Mammary epithelial cell (primary cell): ENCODE measurements at regions of chr5 and their contacts with region 1.

Region 1: DNA sequence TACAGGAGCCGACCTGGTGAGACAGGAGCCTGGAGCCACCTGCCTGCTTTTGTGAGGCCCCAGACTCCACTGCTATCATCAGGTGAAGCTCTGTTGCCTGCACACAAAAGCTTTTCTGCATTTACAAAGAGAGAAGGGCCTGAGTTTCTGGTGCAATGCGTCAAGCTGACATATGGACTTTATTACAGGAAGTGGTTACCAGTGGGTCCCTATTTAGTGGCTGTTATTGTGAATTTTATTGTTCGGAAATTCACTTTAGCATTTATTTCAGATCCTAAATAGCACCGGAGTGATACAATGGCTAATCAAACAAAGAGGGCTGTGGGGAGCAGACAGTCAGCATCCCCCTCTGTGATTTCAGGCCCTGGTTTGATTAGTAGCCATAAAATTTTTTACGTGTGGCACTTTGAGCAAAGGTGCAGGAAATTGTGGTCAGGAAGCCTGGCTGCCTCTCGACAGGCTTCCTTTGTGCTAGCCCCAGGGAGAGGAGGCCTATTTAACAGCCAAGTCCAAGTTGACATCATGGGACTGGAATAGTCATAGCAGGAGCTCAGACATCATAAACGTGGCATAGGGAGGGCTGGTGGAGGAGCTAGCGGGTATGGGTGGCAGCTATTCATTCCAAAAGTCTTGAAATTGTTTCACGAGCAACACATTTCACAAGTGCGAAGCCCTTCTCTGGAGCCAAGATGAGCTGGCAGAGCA is 8.4 kb downstream of the TGFBI start:
- DNase-seq: peak; percentile 91
- H3K4me3 ChIP-seq: no peak overlapping the region
- H3K27ac ChIP-seq: peak overlapping the region; percentile 66
- H3K4me1 ChIP-seq: peaks cover 56% of the 10 kb centered on the region
- H3K27me3 ChIP-seq: no peaks in the 10 kb centered on the region
- CTCF ChIP-seq: no peak

Region 2: GRCh38 chr5:135864503-135865435 is 172.4 kb before region 1 on chr5:
- CTCF ChIA-PET with region 1: no interaction called
- dilution Hi-C with region 1: no loop called
- in situ Hi-C with region 1: no loop called
- intact Hi-C with region 1: no loop called
- DNase-seq: no peak
- H3K4me3 ChIP-seq: no peak overlapping the region
- H3K27ac ChIP-seq: no peak overlapping the region
- H3K4me1 ChIP-seq: no peaks in the 10 kb centered on the region
- H3K27me3 ChIP-seq: peaks cover 2% of the 10 kb centered on the region
- CTCF ChIP-seq: no peak

Region 3: GRCh38 chr5:135900276-135900675 is 136.9 kb before region 1 on chr5:
- CTCF ChIA-PET with region 1: no interaction called
- dilution Hi-C with region 1: no loop called
- in situ Hi-C with region 1: no loop called
- intact Hi-C with region 1: no loop called
- DNase-seq: no peak
- H3K4me3 ChIP-seq: no peak overlapping the region
- H3K27ac ChIP-seq: no peak overlapping the region
- H3K4me1 ChIP-seq: no peaks in the 10 kb centered on the region
- H3K27me3 ChIP-seq: peaks cover 1% of the 10 kb centered on the region
- CTCF ChIP-seq: no peak

Region 4: DNA sequence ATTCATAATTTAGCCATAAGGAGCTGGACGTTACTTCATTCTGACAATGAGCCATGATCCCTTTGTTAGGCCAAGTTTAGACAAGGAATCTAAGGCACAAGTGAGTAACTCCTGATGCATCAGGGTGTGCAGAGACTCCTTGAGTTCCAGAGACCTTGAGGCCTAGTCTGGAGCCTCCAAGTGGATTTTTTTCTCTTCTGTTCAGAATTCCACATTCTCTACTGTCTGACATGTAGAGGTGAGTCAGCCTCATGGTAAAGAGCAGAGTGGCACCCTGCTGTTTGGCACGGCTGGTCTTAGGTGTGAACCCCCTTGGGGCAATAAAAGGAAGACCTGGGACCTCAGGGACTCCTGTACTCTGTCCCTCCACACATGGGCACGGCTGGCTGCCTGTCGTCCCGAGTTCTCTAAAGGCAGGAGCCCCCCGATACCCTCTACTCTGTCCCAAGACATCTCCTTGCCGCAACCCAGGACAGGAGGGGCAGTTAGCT is 30.3 kb before region 1 on chr5:
- CTCF ChIA-PET with region 1: no interaction called
- dilution Hi-C with region 1: no loop called
- in situ Hi-C with region 1: no loop called
- intact Hi-C with region 1: loop called (anchors 1 kb)
- DNase-seq: peak; percentile 96
- H3K4me3 ChIP-seq: no peak overlapping the region
- H3K27ac ChIP-seq: peak overlapping the region; percentile 82
- H3K4me1 ChIP-seq: peaks cover 50% of the 10 kb centered on the region
- H3K27me3 ChIP-seq: no peaks in the 10 kb centered on the region
- CTCF ChIP-seq: no peak

Region 5: DNA sequence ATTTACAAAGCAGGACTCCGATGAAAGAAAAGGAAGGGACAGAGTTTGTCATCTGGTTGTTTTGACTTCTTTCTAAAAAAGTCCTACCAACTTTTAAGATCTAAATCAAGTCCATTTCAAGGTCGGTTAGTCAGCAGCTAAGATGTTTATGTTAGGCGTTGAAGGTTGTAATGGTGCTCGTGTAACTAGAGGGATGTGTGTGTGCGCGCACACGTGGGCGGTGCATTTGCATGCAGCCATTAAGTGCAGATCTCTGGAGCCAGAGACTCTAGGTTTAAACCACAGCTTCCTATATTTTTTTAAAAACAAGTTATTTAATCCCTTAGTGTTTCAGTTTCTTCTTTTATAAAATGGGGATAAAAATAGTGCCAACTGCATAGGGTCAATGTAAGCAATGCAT is 232.8 kb after region 1 on chr5:
- CTCF ChIA-PET with region 1: no interaction called
- dilution Hi-C with region 1: no loop called
- in situ Hi-C with region 1: no loop called
- intact Hi-C with region 1: no loop called
- DNase-seq: no peak
- H3K4me3 ChIP-seq: no peak overlapping the region
- H3K27ac ChIP-seq: no peak overlapping the region
- H3K4me1 ChIP-seq: no peaks in the 10 kb centered on the region
- H3K27me3 ChIP-seq: peaks cover 2% of the 10 kb centered on the region
- CTCF ChIP-seq: no peak